ENCODE measurements at regions of chr17 and their contacts with region 1.

Region 1: GRCh38 chr17:9291912-9292560 is 270.7 kb downstream of the NTN1 start:
- DNase-seq: peak; percentile 49
- ATAC-seq: peak; percentile 92
- H3K4me3 Mint-ChIP-seq: no peak overlapping the region
- H3K27ac Mint-ChIP-seq: 0 out of 2 replicates have a peak overlapping the region, but pooled peaks have one; percentile 21
- H3K4me1 Mint-ChIP-seq: peaks cover 6% of the 10 kb centered on the region
- H3K27me3 Mint-ChIP-seq: no peaks in the 10 kb centered on the region
- CTCF ChIP-seq: peak; percentile 34; the same call in 1 of the 2 replicates

Region 2: GRCh38 chr17:9225274-9226101 is 66.5 kb before region 1 on chr17:
- CTCF ChIA-PET with region 1: interaction called, 11 read pairs
- POLR2A ChIA-PET with region 1: no interaction called
- DNase-seq: peak; percentile 62
- ATAC-seq: peak; percentile 70
- H3K4me3 Mint-ChIP-seq: no peak overlapping the region
- H3K27ac Mint-ChIP-seq: no peak overlapping the region
- H3K4me1 Mint-ChIP-seq: peaks cover 14% of the 10 kb centered on the region
- H3K27me3 Mint-ChIP-seq: no peaks in the 10 kb centered on the region
- CTCF ChIP-seq: no peak

Region 3: GRCh38 chr17:9237661-9238311 is 54.2 kb before region 1 on chr17:
- CTCF ChIA-PET with region 1: no interaction called
- POLR2A ChIA-PET with region 1: no interaction called
- DNase-seq: no peak
- ATAC-seq: no peak
- H3K4me3 Mint-ChIP-seq: no peak overlapping the region
- H3K27ac Mint-ChIP-seq: no peak overlapping the region
- H3K4me1 Mint-ChIP-seq: peaks cover 34% of the 10 kb centered on the region
- H3K27me3 Mint-ChIP-seq: peaks cover 17% of the 10 kb centered on the region
- CTCF ChIP-seq: no peak

Region 4: GRCh38 chr17:9309216-9309615 is 17.2 kb after region 1 on chr17:
- CTCF ChIA-PET with region 1: interaction called, 14 read pairs
- POLR2A ChIA-PET with region 1: no interaction called
- DNase-seq: no peak
- ATAC-seq: peak; percentile 78
- H3K4me3 Mint-ChIP-seq: peak overlapping the region; percentile 51
- H3K27ac Mint-ChIP-seq: peak overlapping the region; percentile 96
- H3K4me1 Mint-ChIP-seq: peaks cover 36% of the 10 kb centered on the region
- H3K27me3 Mint-ChIP-seq: no peaks in the 10 kb centered on the region
- CTCF ChIP-seq: no peak

Region 5: GRCh38 chr17:9527788-9528187 is 235.8 kb after region 1 on chr17:
- CTCF ChIA-PET with region 1: no interaction called
- POLR2A ChIA-PET with region 1: no interaction called
- DNase-seq: no peak
- ATAC-seq: no peak
- H3K4me3 Mint-ChIP-seq: no peak overlapping the region
- H3K27ac Mint-ChIP-seq: no peak overlapping the region
- H3K4me1 Mint-ChIP-seq: peaks cover 7% of the 10 kb centered on the region
- H3K27me3 Mint-ChIP-seq: no peaks in the 10 kb centered on the region
- CTCF ChIP-seq: no peak